Vagina (tissue), 2 donors: ENCODE measurements at regions of chr20 and their contacts with region 1.

Region 1: GRCh38 chr20:43438578-43439316 is 18.9 kb upstream of the SRSF6 start:
- DNase-seq: peak in 1 of 2 donors; percentile 49
- H3K4me3 ChIP-seq: no peak overlapping the region
- H3K27ac ChIP-seq: no peak overlapping the region
- H3K4me1 ChIP-seq: no peaks in the 10 kb centered on the region
- H3K27me3 ChIP-seq: no peaks in the 10 kb centered on the region
- CTCF ChIP-seq: no peak
- POLR2A ChIP-seq: no peak

Region 2: GRCh38 chr20:43337036-43337435 is 101.7 kb before region 1 on chr20:
- intact Hi-C with region 1: no loop called
- DNase-seq: no peak
- H3K4me3 ChIP-seq: no peak overlapping the region
- H3K27ac ChIP-seq: no peak overlapping the region
- H3K4me1 ChIP-seq: no peaks in the 10 kb centered on the region
- H3K27me3 ChIP-seq: no peaks in the 10 kb centered on the region
- CTCF ChIP-seq: no peak
- POLR2A ChIP-seq: no peak

Region 3: GRCh38 chr20:45235995-45236394 is 1797.2 kb after region 1 on chr20:
- intact Hi-C with region 1: loop called (anchors 5 kb)
- DNase-seq: no peak
- H3K4me3 ChIP-seq: no peak overlapping the region
- H3K27ac ChIP-seq: no peak overlapping the region
- H3K4me1 ChIP-seq: no peaks in the 10 kb centered on the region
- H3K27me3 ChIP-seq: no peaks in the 10 kb centered on the region
- CTCF ChIP-seq: peak in 1 of 3 experiments; percentile 5
- POLR2A ChIP-seq: no peak